Caco-2 (cell line): ENCODE measurements at regions of chr2 and their contacts with region 1.

Region 1: GRCh38 chr2:43519643-43520221 is 76.1 kb downstream of the THADA start:
- DNase-seq: no peak
- H3K4me3 ChIP-seq: no peak overlapping the region
- H3K4me3 Mint-ChIP-seq: no peak overlapping the region
- H3K27ac Mint-ChIP-seq: no peak overlapping the region
- H3K4me1 ChIP-seq: no peaks in the 10 kb centered on the region
- H3K4me1 Mint-ChIP-seq: no peaks in the 10 kb centered on the region
- H3K27me3 ChIP-seq: no peaks in the 10 kb centered on the region
- H3K27me3 Mint-ChIP-seq: no peaks in the 10 kb centered on the region
- CTCF ChIP-seq: no peak

Region 2: GRCh38 chr2:42879913-42880737 is 639.6 kb before region 1 on chr2:
- CTCF ChIA-PET with region 1: no interaction called
- POLR2A ChIA-PET with region 1: interaction called, 10 read pairs
- intact Hi-C with region 1: no loop called
- DNase-seq: peak; percentile 35 to 52
- H3K4me3 ChIP-seq: no peak overlapping the region
- H3K4me3 Mint-ChIP-seq: no peak overlapping the region
- H3K27ac Mint-ChIP-seq: no peak overlapping the region
- H3K4me1 ChIP-seq: peaks cover 7% of the 10 kb centered on the region
- H3K4me1 Mint-ChIP-seq: peaks cover 7% of the 10 kb centered on the region
- H3K27me3 ChIP-seq: no peaks in the 10 kb centered on the region
- H3K27me3 Mint-ChIP-seq: no peaks in the 10 kb centered on the region
- CTCF ChIP-seq: no peak

Region 3: DNA sequence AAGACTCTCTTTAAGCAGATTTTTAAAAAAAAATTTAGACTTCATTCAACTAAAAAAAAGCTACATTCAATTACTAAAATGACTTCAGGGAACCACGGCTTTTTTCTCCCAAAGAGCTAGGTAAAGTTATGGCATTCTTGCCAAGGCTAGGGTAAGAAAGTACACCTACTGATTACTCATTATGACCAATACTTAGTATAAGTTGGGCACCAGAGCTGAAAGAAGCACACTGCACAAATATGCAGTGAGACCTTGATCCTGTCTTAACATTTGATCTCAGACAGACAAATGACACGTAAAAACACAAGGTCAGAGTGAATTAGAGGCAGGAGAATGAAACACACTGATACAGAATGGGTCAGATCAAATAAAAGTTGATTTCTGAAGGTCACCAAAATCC is 12.6 kb before region 1 on chr2:
- CTCF ChIA-PET with region 1: no interaction called
- POLR2A ChIA-PET with region 1: no interaction called
- intact Hi-C with region 1: loop called (anchors 2 kb)
- DNase-seq: no peak
- H3K4me3 ChIP-seq: no peak overlapping the region
- H3K4me3 Mint-ChIP-seq: no peak overlapping the region
- H3K27ac Mint-ChIP-seq: no peak overlapping the region
- H3K4me1 ChIP-seq: peaks cover 18% of the 10 kb centered on the region
- H3K4me1 Mint-ChIP-seq: peaks cover 17% of the 10 kb centered on the region
- H3K27me3 ChIP-seq: no peaks in the 10 kb centered on the region
- H3K27me3 Mint-ChIP-seq: no peaks in the 10 kb centered on the region
- CTCF ChIP-seq: no peak

Region 4: DNA sequence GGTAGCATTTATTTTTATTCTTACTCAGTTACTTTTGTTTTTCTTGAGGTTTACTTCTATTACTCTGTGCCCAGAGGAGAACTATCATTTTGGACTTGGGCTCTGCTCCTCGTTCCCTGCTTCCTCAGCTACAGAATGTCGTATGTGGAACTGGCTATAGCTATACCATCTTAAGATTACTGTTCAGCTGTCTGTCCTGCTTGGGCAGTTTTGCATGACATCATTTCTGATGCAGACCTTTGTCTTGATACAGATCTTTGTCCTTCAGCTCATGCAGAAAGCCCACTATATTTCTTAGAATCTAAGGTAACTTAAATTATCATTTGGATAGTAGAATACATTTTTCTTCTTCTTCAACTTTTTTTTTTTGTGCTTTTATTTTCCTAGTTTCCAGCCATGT is 170.3 kb after region 1 on chr2:
- CTCF ChIA-PET with region 1: no interaction called
- POLR2A ChIA-PET with region 1: interaction called, 13 read pairs
- intact Hi-C with region 1: no loop called
- DNase-seq: no peak
- H3K4me3 ChIP-seq: no peak overlapping the region
- H3K4me3 Mint-ChIP-seq: no peak overlapping the region
- H3K27ac Mint-ChIP-seq: no peak overlapping the region
- H3K4me1 ChIP-seq: no peaks in the 10 kb centered on the region
- H3K4me1 Mint-ChIP-seq: no peaks in the 10 kb centered on the region
- H3K27me3 ChIP-seq: 0 out of 2 replicates have a peak, but pooled peaks cover 2% of the 10 kb centered on the region
- H3K27me3 Mint-ChIP-seq: peaks cover 10% of the 10 kb centered on the region
- CTCF ChIP-seq: no peak

Region 5: GRCh38 chr2:43792653-43793052 is 272.9 kb after region 1 on chr2:
- CTCF ChIA-PET with region 1: no interaction called
- POLR2A ChIA-PET with region 1: no interaction called
- intact Hi-C with region 1: no loop called
- DNase-seq: no peak
- H3K4me3 ChIP-seq: no peak overlapping the region
- H3K4me3 Mint-ChIP-seq: no peak overlapping the region
- H3K27ac Mint-ChIP-seq: no peak overlapping the region
- H3K4me1 ChIP-seq: no peaks in the 10 kb centered on the region
- H3K4me1 Mint-ChIP-seq: no peaks in the 10 kb centered on the region
- H3K27me3 ChIP-seq: no peaks in the 10 kb centered on the region
- H3K27me3 Mint-ChIP-seq: no peaks in the 10 kb centered on the region
- CTCF ChIP-seq: no peak